Right ventricle myocardium inferior (tissue), 1 donor: ENCODE measurements at regions of chr3 and their contacts with region 1.

Region 1: GRCh38 chr3:182713743-182714517 is 79.4 kb upstream of the ATP11B start:
- DNase-seq: no peak
- ATAC-seq: peak; percentile 86

Region 2: GRCh38 chr3:182837855-182838454 is 124.0 kb after region 1 on chr3:
- intact Hi-C with region 1: loop called (anchors 2 kb)
- DNase-seq: no peak
- ATAC-seq: no peak

Region 3: DNA sequence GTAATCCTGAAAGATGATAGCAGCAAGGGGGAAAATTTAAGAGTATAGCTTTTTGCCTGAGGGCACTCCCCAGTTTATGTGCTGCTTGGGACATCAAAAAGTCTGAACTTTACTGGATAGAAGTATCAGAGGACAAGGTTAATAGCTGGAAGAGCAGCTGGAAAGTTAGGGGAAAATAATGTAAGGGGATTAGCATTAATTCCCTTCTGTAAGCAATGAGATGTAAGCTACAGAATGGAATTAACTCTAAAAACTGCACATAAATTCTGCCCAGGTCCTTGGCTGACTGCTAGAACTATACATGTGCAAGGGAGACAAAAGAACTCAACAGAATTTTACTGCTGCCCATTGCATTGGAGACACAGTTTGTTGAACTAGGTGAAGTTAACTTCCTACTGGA is 135.0 kb after region 1 on chr3:
- intact Hi-C with region 1: no loop called
- DNase-seq: no peak
- ATAC-seq: no peak